Cardiac septum (tissue), 1 donor: ENCODE measurements at regions of chr6 and their contacts with region 1.

Region 1: DNA sequence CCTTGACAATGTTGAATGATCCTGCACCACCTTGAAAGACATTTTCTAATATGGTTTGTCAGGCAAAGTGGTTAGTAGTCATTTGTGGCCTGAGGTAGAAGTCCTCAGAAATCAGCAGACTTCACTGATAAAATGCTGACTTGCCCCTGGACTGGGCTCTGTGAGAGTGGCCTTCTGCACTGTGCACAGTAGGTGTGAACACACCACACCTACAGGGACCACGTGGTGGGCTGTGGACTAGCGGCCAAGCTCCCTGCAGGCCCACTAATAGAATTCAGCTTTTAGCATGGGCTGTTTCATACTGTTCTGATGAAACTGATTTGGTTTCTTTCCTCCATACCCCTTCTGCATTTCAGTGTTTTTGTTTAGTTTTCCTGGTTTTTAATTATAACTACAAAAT is 7.3 kb downstream of the BPHL start:
- DNase-seq: no peak

Region 2: DNA sequence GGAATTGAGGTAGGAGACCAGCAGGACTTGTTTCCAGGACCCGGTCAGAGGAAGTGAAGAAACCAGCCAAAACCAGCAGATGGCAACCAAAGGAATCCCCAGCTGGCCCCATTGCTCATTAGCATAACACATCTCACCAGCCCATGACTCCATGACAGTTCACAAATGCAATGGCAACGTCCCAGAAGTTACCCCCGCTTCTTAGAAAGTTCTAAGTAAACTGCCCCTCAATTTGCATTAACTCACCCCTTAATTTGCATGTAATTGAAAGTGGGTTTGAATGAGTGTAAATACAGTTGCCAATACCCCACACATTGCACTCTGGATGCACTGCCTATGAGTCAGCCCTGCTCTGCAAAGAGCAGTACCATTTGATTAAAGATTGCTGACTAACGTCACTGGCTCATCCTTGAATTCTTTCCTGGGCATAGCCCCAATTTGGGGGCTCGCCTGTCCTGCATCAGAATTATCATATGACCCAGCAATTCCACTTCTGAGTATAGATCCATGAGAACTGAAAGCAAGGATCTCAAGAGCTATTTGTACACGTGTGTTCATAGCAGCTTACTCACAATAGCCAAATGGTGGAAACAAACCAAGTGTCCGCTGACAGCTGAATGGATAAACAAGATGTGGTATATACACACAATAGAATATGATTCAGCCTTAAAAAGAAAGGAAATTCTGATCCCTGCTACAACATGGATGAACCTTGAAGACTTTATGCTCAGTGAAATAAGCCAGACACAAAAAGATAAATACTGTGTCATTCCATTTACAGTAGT is 411.5 kb before region 1 on chr6:
- intact Hi-C with region 1: no loop called
- DNase-seq: no peak

Region 3: DNA sequence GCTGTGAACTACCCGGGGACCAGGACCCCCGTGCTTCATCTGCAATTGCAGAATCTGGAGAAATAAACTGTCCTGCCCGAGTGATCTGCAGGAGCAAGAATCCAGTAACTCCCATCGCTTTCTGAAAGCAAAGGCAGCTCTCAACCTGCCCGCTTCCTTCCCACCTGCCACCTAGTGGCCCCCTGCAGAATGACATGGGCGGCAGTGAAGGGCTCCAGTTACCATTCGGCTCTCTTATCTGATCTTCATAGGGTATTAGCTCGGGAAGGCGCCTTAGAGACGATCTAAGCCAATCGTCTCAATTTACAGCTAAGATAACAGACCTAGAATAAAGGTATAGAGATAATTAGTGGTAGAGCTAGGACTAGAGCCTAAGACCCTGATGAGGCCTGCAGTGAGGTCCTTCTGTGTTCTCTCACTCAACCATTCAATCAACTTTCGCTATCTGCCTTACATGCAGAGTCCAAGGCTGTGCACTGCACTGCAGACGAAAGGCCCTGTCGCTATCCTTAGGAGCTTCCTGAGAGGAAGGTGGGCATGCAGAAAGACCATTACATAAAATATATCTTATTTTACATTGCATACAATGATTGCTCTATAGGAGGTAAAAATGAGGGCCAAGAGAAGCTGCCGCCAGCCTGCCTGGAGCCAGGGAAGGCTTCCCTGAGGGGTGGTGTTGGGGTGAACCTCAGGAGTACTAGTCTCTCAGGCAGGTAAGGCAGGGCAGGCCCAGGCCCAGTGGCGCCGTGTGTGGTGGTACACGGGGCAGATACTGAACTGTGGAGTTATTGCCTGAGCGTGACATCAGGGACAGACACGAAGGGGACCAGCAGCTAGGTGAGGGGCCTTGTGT is 125.9 kb after region 1 on chr6:
- intact Hi-C with region 1: loop called (anchors 1 kb)
- DNase-seq: peak; percentile 84